ENCODE measurements at regions of chr15 and their contacts with region 1.

Region 1: DNA sequence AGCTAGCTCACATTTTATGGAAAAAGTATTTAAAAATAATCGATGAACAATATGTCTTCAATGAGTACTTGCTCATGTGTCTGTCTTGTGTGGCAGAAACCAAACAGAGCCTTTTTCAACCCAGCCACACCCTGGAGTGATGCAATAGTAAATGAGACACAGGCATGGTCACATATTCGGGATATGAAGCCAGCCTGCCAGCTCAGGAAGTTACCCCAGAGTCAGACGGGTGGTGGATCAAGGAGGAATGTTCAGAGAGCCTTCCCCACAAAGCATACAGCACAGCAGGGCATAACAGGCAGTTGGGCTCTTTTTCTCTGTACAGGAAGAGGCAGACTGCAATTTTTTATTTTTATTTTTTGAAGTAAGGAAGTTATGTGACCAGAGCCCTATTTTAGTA is 27.3 kb downstream of the LARP6 start:
- DNase-seq: no peak
- H3K4me3 ChIP-seq: no peak overlapping the region
- H3K27ac ChIP-seq: no peak overlapping the region
- H3K27me3 ChIP-seq: no peaks in the 10 kb centered on the region
- CTCF ChIP-seq: no peak

Region 2: GRCh38 chr15:70504299-70504951 is 322.2 kb before region 1 on chr15:
- CTCF ChIA-PET with region 1: no interaction called
- POLR2A ChIA-PET with region 1: no interaction called
- DNase-seq: no peak
- H3K4me3 ChIP-seq: no peak overlapping the region
- H3K27ac ChIP-seq: no peak overlapping the region
- H3K27me3 ChIP-seq: peaks cover 12% of the 10 kb centered on the region
- CTCF ChIP-seq: no peak

Region 3: GRCh38 chr15:70679919-70680231 is 146.8 kb before region 1 on chr15:
- CTCF ChIA-PET with region 1: interaction called, 25 read pairs
- POLR2A ChIA-PET with region 1: no interaction called
- DNase-seq: no peak
- H3K4me3 ChIP-seq: no peak overlapping the region
- H3K27ac ChIP-seq: no peak overlapping the region
- H3K27me3 ChIP-seq: no peaks in the 10 kb centered on the region
- CTCF ChIP-seq: no peak

Region 4: DNA sequence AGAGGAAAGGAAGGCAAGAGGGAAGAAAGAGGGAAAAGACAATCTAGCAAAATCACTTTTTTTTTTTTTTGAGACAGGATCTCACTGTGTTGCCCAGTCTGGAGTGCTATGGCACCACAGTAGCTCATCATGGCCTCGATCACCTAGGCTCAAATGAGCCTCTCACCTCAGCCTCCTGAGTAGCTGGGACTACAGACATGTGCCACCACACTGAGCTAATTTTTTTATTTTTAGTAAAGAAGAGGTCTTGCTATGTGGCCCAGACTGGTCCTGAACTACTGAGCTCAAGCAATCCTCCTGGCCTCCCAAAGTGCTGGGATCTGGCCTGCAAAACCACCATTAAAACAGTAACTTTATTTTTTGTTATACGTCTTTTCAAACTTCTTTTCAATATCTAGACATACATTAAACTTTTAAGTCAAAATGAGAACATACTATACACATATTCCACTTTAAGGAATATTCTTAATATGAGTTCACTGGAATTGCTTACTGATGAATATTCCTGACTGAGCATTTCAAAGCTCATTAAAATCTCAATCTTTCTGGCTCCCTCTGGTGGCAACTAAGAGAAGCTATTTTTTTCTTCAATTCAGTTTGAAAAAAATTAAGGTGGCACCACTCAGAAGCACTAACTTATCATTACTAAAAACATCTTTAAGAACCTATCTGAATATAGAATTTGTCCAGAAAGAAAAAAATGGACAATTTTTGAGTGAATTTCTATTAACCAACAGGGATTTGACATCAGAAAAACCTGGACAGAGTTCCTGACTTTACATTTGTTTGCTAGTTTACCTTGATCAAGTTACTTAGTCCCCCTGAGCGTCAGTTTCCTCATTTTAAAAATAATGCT is 104.1 kb before region 1 on chr15:
- CTCF ChIA-PET with region 1: no interaction called
- POLR2A ChIA-PET with region 1: no interaction called
- DNase-seq: peak; percentile 43
- H3K4me3 ChIP-seq: no peak overlapping the region
- H3K27ac ChIP-seq: no peak overlapping the region
- H3K27me3 ChIP-seq: no peaks in the 10 kb centered on the region
- CTCF ChIP-seq: peak; percentile 71

Region 5: GRCh38 chr15:70765504-70766281 is 60.9 kb before region 1 on chr15:
- CTCF ChIA-PET with region 1: no interaction called
- POLR2A ChIA-PET with region 1: no interaction called
- DNase-seq: no peak
- H3K4me3 ChIP-seq: no peak overlapping the region
- H3K27ac ChIP-seq: no peak overlapping the region
- H3K27me3 ChIP-seq: no peaks in the 10 kb centered on the region
- CTCF ChIP-seq: no peak

Measured in AG04450 (cell line).